Heart left ventricle (tissue), 16 donors: ENCODE measurements at regions of chr15 and their contacts with region 1.

Region 1: DNA sequence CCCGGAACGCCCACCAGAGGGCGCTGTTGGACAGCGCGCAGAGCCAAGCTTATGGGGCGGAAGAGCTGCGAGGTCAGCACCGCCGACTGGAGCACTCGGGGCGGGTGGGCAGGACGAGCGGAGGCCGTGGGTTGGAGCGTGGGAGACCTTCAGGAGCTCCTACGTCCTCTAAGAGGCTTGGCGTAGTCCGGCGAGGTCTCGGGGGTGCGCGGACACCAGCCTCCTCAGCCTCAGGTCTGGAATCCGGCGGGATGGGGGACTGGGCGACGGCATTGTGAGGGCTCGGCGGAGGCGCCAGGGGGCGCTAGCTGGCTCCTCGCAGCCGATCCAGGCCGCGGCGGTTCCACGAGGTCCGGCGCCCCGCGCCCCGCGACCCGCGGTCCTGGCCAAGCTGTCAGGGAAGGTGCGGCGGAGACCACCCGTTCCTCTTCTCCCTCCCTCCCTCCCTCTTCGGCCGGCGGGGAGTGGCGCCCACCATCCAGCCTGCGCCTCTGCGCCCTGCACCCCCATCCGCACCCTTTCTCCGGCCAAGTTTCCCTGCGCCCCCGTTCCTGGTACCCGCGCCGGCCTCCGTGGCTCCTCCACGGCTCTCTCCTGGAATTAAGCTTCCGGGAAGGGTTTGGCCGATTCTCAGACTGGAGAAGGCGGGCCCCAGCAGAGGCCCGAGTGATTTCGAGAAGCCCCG is 24.3 kb upstream of the POLG start:
- DNase-seq: peak; percentile 61 to 90 (median 70)
- ATAC-seq: peak; percentile 72 to 93 (median 90)
- H3K4me3 ChIP-seq: peak overlapping the region in 11 of 12 donors; percentile 16 to 64 (median 52)
- H3K27ac ChIP-seq: no peak overlapping the region
- H3K4me1 ChIP-seq: peaks cover 0 to 32% (median 8%) of the 10 kb centered on the region in 12 donors
- H3K27me3 ChIP-seq: peaks cover 36 to 100% (median 89%) of the 10 kb centered on the region in 9 donors
- CTCF ChIP-seq: peak; percentile 92 to 100 (median 98)
- POLR2A ChIP-seq: no peak

Region 2: DNA sequence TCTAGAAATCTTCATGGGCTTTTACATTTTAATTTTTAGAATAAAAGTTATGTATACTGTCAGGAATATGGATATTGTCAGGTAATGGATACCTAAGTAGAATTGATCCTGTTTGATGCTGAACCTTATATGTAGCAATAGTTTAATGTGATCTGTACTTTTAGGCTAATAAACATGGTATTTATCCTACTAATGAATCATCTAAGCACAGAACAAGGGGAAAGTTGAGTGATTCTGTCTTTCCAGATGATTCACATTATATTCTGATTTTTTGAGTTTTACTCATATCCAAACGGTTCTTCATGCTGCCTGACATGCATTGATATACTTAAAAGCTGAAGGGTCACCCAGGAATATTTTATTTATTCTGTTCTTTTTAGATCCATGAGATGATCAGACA is 80.6 kb before region 1 on chr15:
- intact Hi-C with region 1: no loop called
- DNase-seq: no peak
- ATAC-seq: no peak
- H3K4me3 ChIP-seq: no peak overlapping the region
- H3K27ac ChIP-seq: no peak overlapping the region
- H3K4me1 ChIP-seq: no peaks in the 10 kb centered on the region
- H3K27me3 ChIP-seq: no peaks in the 10 kb centered on the region
- CTCF ChIP-seq: no peak
- POLR2A ChIP-seq: no peak

Region 3: GRCh38 chr15:89416141-89416853 is 57.4 kb after region 1 on chr15:
- intact Hi-C with region 1: loop called in 1 of 10 experiments (anchors 5 kb)
- DNase-seq: peak in 3 of 5 donors; percentile 30
- ATAC-seq: peak; percentile 25 to 57 (median 42)
- H3K4me3 ChIP-seq: no peak overlapping the region
- H3K27ac ChIP-seq: no peak overlapping the region
- H3K4me1 ChIP-seq: peaks cover 0 to 5% (median 0%) of the 10 kb centered on the region in 12 donors
- H3K27me3 ChIP-seq: peaks cover 38 to 100% (median 81%) of the 10 kb centered on the region in 9 donors
- CTCF ChIP-seq: peak; percentile 44 to 74 (median 64)
- POLR2A ChIP-seq: no peak

Region 4: DNA sequence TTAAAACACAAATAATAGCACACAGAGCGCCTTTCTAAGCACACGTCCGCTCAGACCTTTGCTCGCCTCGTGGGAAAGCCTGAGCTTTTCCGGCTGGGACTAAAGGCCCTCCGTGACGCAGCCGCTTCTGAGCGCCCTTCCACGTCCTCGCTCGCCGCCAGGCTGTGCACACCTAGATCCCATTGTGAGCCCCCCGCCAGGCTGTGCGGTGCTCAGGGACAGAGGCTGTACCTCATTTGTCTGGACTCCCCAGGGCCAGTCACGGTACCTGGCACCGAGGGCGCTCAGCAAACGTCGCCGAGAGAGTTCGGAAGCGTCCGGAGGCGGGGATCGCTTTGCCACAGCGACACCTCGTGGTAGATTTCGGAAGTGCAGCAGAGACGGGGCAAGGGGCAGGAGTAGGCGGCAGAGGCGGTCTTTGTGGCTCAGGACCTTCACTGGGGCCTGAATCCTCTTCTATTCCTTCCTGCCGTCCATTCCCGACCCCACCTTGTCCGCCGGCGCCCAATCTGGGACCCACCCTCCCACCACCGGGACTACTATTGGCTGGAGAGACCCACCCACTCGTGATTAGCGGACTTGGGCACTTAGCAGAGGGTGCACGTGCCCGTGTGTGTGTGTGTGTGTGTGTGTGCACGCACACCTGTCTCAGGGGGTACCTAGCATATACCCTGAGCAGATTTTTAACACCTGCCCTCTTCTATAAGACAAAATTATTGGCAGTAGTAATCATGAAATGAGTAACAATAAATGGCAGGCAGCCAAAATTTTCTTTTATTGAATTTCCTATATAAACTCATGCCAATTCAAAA is 71.8 kb after region 1 on chr15:
- intact Hi-C with region 1: loop called (anchors 1 to 2 kb)
- DNase-seq: peak; percentile 77 to 91 (median 82)
- ATAC-seq: peak; percentile 90 to 97 (median 92)
- H3K4me3 ChIP-seq: peak overlapping the region; percentile 24 to 62 (median 47)
- H3K27ac ChIP-seq: no peak overlapping the region
- H3K4me1 ChIP-seq: peaks cover 0 to 14% (median 5%) of the 10 kb centered on the region in 12 donors
- H3K27me3 ChIP-seq: peaks cover 0 to 15% (median 3%) of the 10 kb centered on the region in 9 donors
- CTCF ChIP-seq: peak; percentile 96 to 99 (median 97)
- POLR2A ChIP-seq: no peak

Region 5: GRCh38 chr15:89472785-89473256 is 113.9 kb after region 1 on chr15:
- intact Hi-C with region 1: loop called in 7 of 10 experiments (anchors 2 to 5 kb)
- DNase-seq: peak in 1 of 5 donors; percentile 28
- ATAC-seq: peak; percentile 37 to 64 (median 54)
- H3K4me3 ChIP-seq: no peak overlapping the region
- H3K27ac ChIP-seq: no peak overlapping the region
- H3K4me1 ChIP-seq: peaks cover 0 to 5% (median 0%) of the 10 kb centered on the region in 12 donors
- H3K27me3 ChIP-seq: peaks cover 5 to 59% (median 24%) of the 10 kb centered on the region in 9 donors
- CTCF ChIP-seq: peak; percentile 35 to 66 (median 51)
- POLR2A ChIP-seq: no peak

Region 6: DNA sequence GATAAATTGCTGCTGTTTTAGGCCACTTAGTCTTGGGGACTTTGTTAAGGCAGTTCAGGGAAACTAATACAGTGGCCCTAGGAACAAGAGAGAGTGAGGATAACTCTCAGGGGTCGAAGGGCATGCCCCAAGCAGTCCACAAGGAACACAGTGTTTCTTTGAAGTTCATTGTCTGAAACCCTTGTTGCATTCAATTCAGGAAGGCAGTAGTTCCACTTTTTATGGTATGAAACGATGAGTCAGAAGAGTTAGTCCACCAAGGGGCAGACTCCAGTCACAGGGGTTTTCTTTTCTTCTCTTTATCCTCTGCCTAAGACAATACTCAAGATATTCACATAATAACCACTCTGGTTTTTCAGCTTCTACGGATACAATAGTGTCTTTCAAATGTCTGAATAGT is 192.6 kb after region 1 on chr15:
- intact Hi-C with region 1: loop called in 6 of 10 experiments (anchors 5 to 10 kb)
- DNase-seq: no peak
- ATAC-seq: no peak
- H3K4me3 ChIP-seq: no peak overlapping the region
- H3K27ac ChIP-seq: no peak overlapping the region
- H3K4me1 ChIP-seq: no peaks in the 10 kb centered on the region
- H3K27me3 ChIP-seq: peaks cover 0 to 12% (median 0%) of the 10 kb centered on the region in 9 donors
- CTCF ChIP-seq: no peak
- POLR2A ChIP-seq: no peak

Region 7: GRCh38 chr15:89556413-89557262 is 197.7 kb after region 1 on chr15:
- intact Hi-C with region 1: loop called in 7 of 10 experiments (anchors 5 to 10 kb)
- DNase-seq: peak in 3 of 5 donors; percentile 28 to 45 (median 41)
- ATAC-seq: peak in 2 of 4 donors; percentile 41 to 42
- H3K4me3 ChIP-seq: no peak overlapping the region
- H3K27ac ChIP-seq: no peak overlapping the region
- H3K4me1 ChIP-seq: no peaks in the 10 kb centered on the region
- H3K27me3 ChIP-seq: peaks cover 0 to 28% (median 0%) of the 10 kb centered on the region in 9 donors
- CTCF ChIP-seq: peak; percentile 60 to 90 (median 80)
- POLR2A ChIP-seq: no peak

Region 8: GRCh38 chr15:89566141-89566540 is 207.2 kb after region 1 on chr15:
- intact Hi-C with region 1: loop called in 1 of 10 experiments (anchors 10 kb)
- DNase-seq: no peak
- ATAC-seq: no peak
- H3K4me3 ChIP-seq: no peak overlapping the region
- H3K27ac ChIP-seq: no peak overlapping the region
- H3K4me1 ChIP-seq: no peaks in the 10 kb centered on the region
- H3K27me3 ChIP-seq: no peaks in the 10 kb centered on the region
- CTCF ChIP-seq: no peak
- POLR2A ChIP-seq: no peak